GM12878 (cell line): ENCODE measurements at regions of chr6 and their contacts with region 1.

Region 1: DNA sequence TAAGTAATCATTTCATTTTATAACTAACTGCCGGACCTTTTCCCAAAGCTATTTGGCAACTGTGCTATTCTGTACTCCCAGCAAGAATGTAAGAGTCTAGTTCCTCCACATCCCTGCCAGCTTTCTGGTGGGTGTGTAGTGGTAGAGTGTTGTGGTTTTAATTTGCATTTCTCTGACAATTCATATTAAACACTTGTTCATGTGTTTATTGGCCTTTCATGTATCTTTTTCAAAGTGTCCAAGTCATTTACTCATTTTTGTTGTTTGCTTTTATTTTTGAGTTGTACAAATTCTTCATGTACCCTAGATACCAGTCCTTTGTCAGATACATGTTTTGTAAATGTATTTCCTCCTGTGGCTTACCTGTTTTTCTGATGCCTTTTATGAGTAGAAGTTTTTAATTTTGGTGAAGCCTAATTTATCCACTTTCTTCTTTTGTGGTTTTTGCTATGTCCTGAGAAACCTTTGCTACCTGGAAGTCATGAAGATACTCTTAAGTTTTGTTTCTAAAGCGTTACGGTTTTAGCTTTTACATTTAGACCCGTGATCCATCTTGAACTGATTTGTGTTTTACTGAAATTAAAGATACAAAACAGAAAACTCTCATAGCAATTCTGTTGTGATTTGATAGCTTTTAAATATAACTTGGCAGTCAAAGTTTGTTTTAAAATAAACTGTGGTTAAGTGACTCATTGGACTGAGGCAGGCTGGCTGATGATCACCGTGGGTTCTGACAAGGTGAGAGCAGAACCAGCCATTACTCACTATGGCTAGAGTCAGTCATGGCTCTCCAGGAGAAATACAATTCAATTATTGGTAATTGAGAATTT is 8.0 kb downstream of the MYLIP start:
- DNase-seq: no peak
- ATAC-seq: peak; percentile 53
- H3K4me3 ChIP-seq: peak overlapping the region; percentile 47; the same call in 1 of the 2 replicates
- H3K27ac ChIP-seq: no peak overlapping the region
- H3K4me1 ChIP-seq: peaks cover 6% of the 10 kb centered on the region; the same call in 1 of the 2 replicates
- H3K27me3 ChIP-seq: no peaks in the 10 kb centered on the region
- CTCF ChIP-seq: no peak
- EP300 ChIP-seq: no peak
- POLR2A ChIP-seq: no peak
- RAD21 ChIP-seq: no peak

Region 2: GRCh38 chr6:15854826-15855710 is 281.8 kb before region 1 on chr6:
- CTCF ChIA-PET with region 1: no interaction called
- POLR2A ChIA-PET with region 1: no interaction called
- RAD21 ChIA-PET with region 1: no interaction called
- SMC1A ChIA-PET with region 1: no interaction called
- in situ Hi-C with region 1: no loop called
- intact Hi-C with region 1: no loop called
- DNase-seq: no peak
- ATAC-seq: no peak
- H3K4me3 ChIP-seq: no peak overlapping the region
- H3K27ac ChIP-seq: no peak overlapping the region
- H3K4me1 ChIP-seq: no peaks in the 10 kb centered on the region
- H3K27me3 ChIP-seq: no peaks in the 10 kb centered on the region; a peak in 1 of 4 replicates
- CTCF ChIP-seq: no peak
- EP300 ChIP-seq: no peak
- POLR2A ChIP-seq: no peak
- RAD21 ChIP-seq: no peak

Region 3: GRCh38 chr6:16163535-16164300 is 26.9 kb after region 1 on chr6:
- CTCF ChIA-PET with region 1: interaction called, 17 read pairs
- POLR2A ChIA-PET with region 1: interaction called, 6 read pairs
- RAD21 ChIA-PET with region 1: interaction called, 16 read pairs
- SMC1A ChIA-PET with region 1: interaction called, 42 read pairs
- in situ Hi-C with region 1: no loop called
- intact Hi-C with region 1: loop called (anchors 5 kb)
- DNase-seq: no peak
- ATAC-seq: peak; percentile 51
- H3K4me3 ChIP-seq: no peak overlapping the region
- H3K27ac ChIP-seq: no peak overlapping the region
- H3K4me1 ChIP-seq: peaks cover 24% of the 10 kb centered on the region
- H3K27me3 ChIP-seq: no peaks in the 10 kb centered on the region
- CTCF ChIP-seq: no peak
- EP300 ChIP-seq: no peak
- POLR2A ChIP-seq: no peak
- RAD21 ChIP-seq: no peak

Region 4: DNA sequence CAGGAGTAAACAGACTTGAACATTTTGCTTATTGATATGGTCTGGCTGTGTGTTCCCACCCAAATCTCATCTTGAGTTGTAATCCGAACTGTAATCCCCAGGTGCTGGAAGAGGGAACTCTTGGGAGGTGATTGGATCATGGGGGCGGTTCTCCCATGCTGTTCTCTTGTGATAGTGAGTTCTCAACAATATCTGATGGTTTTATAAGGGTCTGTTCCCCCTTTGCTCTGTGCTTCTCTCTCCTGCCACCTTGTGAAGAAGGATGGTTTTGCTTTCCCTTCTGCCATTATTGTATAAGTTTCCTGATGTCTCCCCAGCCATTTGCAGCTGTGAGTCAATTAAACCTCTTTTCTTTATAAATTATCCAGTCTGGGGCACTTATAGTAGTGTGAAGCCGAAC is 32.0 kb after region 1 on chr6:
- CTCF ChIA-PET with region 1: interaction called, 17 read pairs
- POLR2A ChIA-PET with region 1: interaction called, 4 read pairs
- RAD21 ChIA-PET with region 1: interaction called, 16 read pairs
- SMC1A ChIA-PET with region 1: interaction called, 42 read pairs
- in situ Hi-C with region 1: no loop called
- intact Hi-C with region 1: loop called (anchors 5 kb)
- DNase-seq: peak; percentile 32
- ATAC-seq: peak; percentile 86
- H3K4me3 ChIP-seq: no peak overlapping the region
- H3K27ac ChIP-seq: no peak overlapping the region
- H3K4me1 ChIP-seq: peaks cover 13% of the 10 kb centered on the region
- H3K27me3 ChIP-seq: no peaks in the 10 kb centered on the region
- CTCF ChIP-seq: peak; percentile 56 to 66 (median 65)
- EP300 ChIP-seq: no peak
- POLR2A ChIP-seq: no peak
- RAD21 ChIP-seq: peak; percentile 87

Region 5: DNA sequence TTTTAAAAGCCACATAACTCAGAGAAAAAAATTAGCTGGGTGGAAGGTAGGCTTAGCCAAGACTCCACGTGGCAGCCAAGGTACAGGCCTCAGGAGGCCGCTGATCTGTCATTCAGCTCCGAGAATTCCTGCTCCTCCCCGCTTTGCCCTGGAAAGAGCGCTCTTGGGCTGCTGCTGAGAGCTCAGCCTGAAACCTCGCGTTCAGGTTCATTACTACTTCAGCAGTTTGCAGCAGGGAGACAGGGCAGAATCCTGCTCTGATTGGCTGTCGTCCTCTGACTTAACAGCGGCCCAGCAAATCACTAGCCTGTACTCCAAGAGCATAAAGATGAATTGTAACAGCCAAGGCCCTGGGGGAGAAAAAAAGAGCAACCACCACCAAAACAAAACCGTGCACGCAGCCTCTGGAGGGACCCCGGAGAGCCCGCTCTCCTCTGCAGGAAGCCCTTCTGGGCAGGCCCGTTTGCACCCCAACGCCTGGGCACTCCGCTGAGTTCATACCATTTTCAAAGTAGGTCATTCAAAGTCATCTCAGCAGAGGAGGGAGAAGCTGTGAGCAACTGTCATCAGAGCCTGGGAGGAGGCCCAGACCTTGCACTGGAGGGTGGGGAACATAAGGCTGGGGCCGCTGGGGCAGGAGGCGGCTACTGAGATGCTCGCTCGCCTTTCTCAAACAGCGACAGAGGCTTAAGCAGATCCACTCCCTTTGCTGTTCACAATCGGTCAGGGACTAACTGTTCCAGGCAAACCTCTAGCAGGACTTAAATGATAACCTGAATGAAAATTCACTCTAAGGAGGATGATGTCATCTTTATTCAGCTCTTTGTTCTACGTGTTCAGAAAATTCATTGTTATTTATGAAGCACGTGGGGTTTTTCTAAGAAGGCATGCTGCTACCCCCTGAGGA is 666.7 kb after region 1 on chr6:
- CTCF ChIA-PET with region 1: no interaction called
- POLR2A ChIA-PET with region 1: interaction called, 11 read pairs
- RAD21 ChIA-PET with region 1: no interaction called
- SMC1A ChIA-PET with region 1: no interaction called
- in situ Hi-C with region 1: no loop called
- intact Hi-C with region 1: no loop called
- DNase-seq: no peak
- ATAC-seq: no peak
- H3K4me3 ChIP-seq: no peak overlapping the region
- H3K27ac ChIP-seq: no peak overlapping the region
- H3K4me1 ChIP-seq: no peaks in the 10 kb centered on the region
- H3K27me3 ChIP-seq: no peaks in the 10 kb centered on the region; a peak in 1 of 4 replicates
- CTCF ChIP-seq: no peak
- EP300 ChIP-seq: no peak
- POLR2A ChIP-seq: no peak
- RAD21 ChIP-seq: no peak